ENCODE measurements at regions of chr10 and their contacts with region 1.

Region 1: DNA sequence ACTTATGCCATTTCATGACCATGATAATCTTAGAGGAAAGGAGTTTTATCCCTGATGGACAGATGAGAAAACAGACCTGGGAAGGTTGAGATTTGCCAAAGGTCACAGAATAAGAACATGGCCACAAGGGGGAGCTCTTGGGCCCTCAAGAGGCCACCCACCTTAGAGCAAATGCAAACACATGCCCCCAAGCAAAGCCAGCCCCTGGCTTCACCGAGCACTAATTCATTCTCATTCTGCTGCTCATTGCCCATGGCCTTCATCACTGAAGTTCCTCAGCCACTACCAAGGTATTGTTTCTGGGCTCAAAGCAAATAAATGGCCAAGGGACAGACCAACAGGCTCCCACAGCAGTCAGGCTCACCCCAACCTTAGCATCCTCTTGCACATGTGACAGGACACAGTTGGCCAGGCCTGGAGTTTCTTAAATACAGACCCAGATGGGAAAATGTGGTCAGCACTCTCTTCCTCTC is 44.2 kb downstream of the PDLIM1 start:
- DNase-seq: peak; percentile 65
- H3K4me3 Mint-ChIP-seq: no peak overlapping the region
- H3K27ac Mint-ChIP-seq: no peak overlapping the region
- H3K4me1 Mint-ChIP-seq: peaks cover 35% of the 10 kb centered on the region
- H3K27me3 Mint-ChIP-seq: no peaks in the 10 kb centered on the region
- CTCF ChIP-seq: peak; percentile 68

Region 2: GRCh38 chr10:94630017-94630688 is 616.5 kb before region 1 on chr10:
- CTCF ChIA-PET with region 1: no interaction called
- intact Hi-C with region 1: loop called (anchors 5 kb)
- DNase-seq: no peak
- H3K4me3 Mint-ChIP-seq: no peak overlapping the region
- H3K27ac Mint-ChIP-seq: no peak overlapping the region
- H3K4me1 Mint-ChIP-seq: no peaks in the 10 kb centered on the region
- H3K27me3 Mint-ChIP-seq: no peaks in the 10 kb centered on the region
- CTCF ChIP-seq: no peak

Region 3: DNA sequence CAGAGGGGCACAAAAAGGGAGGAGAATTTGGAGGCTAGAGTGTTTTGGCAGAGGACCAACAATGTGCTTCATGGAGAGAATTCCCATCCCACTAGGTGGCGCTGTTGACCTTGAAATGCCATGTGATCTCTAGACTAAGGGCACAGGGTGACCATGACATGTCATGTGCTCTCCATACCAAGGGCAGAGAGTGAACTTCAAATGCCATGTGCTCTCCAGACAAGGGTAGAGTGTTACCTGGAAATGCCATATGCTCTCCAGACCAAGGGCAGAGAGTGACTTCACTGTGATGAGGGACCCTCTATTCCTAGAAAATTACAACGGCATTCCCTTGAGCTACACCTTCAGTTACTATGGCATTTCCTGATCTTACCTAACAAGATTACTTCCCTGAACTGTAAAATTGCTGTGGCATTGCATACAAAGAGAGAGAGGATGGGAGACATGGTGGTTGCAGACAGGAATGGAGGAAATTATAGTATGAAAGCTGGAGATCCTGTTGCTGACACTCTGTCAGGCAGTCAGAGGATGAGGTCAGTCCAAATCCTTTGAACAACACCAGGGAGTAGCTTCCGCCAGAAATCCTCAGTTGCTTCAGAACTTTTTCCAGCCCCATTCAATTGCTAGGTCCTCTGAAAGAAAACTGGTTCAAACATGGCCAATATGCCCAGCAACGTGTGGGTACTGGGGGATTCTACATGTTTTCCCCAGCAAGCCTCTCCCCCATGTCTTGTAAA is 113.4 kb before region 1 on chr10:
- CTCF ChIA-PET with region 1: interaction called, 3 read pairs
- intact Hi-C with region 1: loop called (anchors 10 kb)
- DNase-seq: peak; percentile 60
- H3K4me3 Mint-ChIP-seq: no peak overlapping the region
- H3K27ac Mint-ChIP-seq: no peak overlapping the region
- H3K4me1 Mint-ChIP-seq: no peaks in the 10 kb centered on the region
- H3K27me3 Mint-ChIP-seq: peaks cover 15% of the 10 kb centered on the region
- CTCF ChIP-seq: peak; percentile 50

Region 4: DNA sequence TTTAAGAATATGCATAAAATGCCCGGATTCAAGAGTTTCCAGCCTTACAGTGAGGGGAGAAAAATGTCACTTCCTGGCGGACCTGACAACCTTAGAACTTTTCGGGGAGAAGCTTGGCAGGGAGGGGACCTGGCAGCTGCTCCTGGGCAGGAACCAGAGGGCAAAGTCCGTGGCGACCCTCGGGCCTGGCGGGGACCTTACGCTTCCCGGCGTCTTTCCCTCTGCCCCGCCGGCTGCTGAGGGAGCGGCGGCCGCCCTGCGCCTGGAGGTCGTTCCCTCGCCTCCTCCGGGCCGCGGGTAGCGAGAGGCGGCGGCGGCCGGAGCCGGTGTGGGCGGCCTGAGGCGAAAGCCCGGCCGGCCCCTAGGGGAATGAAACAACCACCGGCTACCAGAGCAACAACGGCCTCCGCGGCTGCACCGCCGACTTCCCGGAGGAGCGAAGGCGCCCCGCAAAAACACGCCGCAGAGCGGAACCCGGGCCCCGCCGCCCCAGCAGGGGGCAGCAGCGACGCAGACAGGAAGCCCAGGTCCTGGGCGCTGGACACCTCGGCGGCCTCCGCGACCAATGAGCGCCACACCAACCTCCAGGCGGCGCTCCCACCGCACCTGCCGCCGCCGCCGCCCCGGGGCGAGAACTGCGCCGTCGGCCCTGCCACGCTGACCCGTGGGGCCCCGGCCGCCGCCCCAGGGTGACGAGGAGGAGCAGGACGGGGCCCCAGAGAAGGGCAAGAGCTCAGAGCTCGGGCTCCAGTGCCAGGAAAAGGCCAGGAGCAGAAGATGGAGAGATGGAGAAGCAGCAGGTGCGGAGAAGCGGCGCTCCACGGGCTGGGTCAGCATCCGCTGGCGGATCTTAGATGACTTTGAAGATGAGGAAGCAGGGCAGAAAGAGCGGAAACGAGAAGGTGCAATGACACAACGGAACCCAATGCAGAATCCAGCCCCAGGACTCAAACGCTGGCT is 63.1 kb before region 1 on chr10:
- CTCF ChIA-PET with region 1: no interaction called
- intact Hi-C with region 1: loop called (anchors 5 kb)
- DNase-seq: peak; percentile 93
- H3K4me3 Mint-ChIP-seq: peak overlapping the region; percentile 70
- H3K27ac Mint-ChIP-seq: no peak overlapping the region
- H3K4me1 Mint-ChIP-seq: peaks cover 16% of the 10 kb centered on the region
- H3K27me3 Mint-ChIP-seq: no peaks in the 10 kb centered on the region
- CTCF ChIP-seq: peak; percentile 84

Region 5: DNA sequence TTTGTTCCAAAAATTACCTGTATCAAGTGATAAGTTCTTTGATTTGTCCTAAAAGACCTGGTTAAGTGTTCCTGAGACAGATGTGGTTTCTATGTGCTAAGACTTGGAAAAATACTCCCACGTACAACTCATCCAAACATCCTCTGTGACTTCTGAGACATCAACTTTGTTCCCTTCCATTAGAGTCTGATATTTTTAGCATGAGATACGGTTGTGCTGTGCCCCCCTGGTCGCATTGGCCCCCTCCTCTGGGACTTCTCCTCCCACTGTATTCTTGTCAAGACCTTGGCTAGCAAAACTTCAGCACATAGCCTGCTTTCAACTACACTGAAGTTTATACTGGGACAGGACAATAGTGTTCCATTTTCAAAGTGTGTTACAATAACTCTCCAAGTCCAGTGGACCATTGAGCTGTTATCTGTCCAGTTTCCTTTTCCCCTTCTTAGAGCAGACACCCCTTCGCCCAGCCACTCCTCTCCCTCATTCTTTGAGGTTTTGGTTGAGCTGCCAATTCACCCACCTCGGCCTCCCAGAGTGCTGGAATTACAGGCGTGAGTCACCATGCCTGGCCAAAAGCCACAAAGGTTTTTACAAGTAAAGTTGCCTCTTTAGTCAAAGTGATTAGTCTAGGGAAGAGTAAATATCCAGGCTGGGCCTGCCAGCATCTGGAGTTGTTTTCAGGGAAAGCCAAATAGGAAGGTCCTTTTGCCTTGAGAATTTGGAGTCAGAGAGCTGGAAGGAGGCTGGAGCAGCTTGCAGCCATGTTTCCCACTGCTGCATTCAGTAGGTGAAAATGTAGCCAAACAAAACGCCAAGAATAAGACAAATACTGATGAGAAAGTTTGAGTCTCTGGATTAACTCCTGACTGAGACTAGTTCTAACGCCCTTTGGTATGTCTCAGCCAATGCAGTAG is 62.0 kb after region 1 on chr10:
- CTCF ChIA-PET with region 1: no interaction called
- intact Hi-C with region 1: loop called (anchors 5 kb)
- DNase-seq: peak; percentile 81
- H3K4me3 Mint-ChIP-seq: peak overlapping the region; percentile 48
- H3K27ac Mint-ChIP-seq: peak overlapping the region; percentile 88
- H3K4me1 Mint-ChIP-seq: peaks cover 35% of the 10 kb centered on the region
- H3K27me3 Mint-ChIP-seq: peaks cover 10% of the 10 kb centered on the region
- CTCF ChIP-seq: no peak